Activated CD4-positive, alpha-beta memory T cell treated with anti-CD3 and anti-CD28 coated beads, Interleukin-2, amount 10 ng/mL, durations not matched to agents 7 days and 5 days (primary cell): ENCODE measurements at regions of chr17 and their contacts with region 1.

Region 1: GRCh38 chr17:38351412-38352222 is at the start of gene SOCS7:
- DNase-seq: peak; percentile 91
- H3K4me3 Mint-ChIP-seq: peak within 1 kb of the TSS; percentile 81
- H3K27ac Mint-ChIP-seq: peak within 1 kb of the TSS; percentile 86
- H3K4me1 Mint-ChIP-seq: peaks cover 36% of the 10 kb centered on the region
- H3K27me3 Mint-ChIP-seq: no peaks in the 10 kb centered on the region
- total RNA-seq, gene SOCS7: 14.1 to 15.0 TPM

Region 2: GRCh38 chr17:38322091-38322779 is 29.4 kb before region 1 on chr17:
- CTCF ChIA-PET with region 1: interaction called, 10 read pairs
- POLR2A ChIA-PET with region 1: interaction called, 4 read pairs
- DNase-seq: peak; percentile 74
- H3K4me3 Mint-ChIP-seq: no peak overlapping the region
- H3K27ac Mint-ChIP-seq: no peak overlapping the region
- H3K4me1 Mint-ChIP-seq: peaks cover 7% of the 10 kb centered on the region
- H3K27me3 Mint-ChIP-seq: no peaks in the 10 kb centered on the region

Region 3: DNA sequence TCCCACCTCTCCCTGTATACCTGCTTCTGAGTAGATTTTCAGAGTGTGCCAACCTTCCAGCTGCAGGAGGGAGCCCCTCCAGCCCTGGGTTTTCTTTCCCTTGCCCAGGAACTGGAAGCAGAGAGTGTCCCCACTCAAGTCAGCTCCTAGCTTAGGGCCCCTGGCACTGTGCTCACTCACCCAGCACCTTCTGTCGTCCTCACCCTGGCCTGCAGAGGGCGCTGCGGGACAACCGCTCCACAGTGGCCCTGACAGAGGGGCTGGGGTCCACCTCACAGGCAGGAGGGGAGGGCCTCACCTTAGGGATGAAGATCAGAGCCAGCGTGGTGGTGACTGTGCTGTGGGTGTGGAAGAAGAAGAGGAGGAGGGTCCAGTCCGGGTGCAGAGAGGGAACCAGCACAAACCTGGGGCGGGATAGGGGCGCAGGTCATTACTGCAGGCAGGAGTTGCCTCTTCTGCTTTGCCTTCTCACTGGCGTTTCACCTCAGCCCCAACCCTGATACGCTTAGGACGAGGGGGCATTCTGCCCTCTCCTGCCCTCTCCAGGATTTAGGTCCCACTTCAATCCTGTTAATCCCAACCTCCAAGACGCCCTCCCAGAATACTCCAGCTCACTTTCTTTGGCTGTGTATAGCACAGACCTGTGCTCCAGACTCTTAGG is 17.9 kb before region 1 on chr17:
- CTCF ChIA-PET with region 1: interaction called, 19 read pairs
- POLR2A ChIA-PET with region 1: no interaction called
- DNase-seq: peak; percentile 64
- H3K4me3 Mint-ChIP-seq: no peak overlapping the region
- H3K27ac Mint-ChIP-seq: no peak overlapping the region
- H3K4me1 Mint-ChIP-seq: no peaks in the 10 kb centered on the region
- H3K27me3 Mint-ChIP-seq: peaks cover 2% of the 10 kb centered on the region

Region 4: DNA sequence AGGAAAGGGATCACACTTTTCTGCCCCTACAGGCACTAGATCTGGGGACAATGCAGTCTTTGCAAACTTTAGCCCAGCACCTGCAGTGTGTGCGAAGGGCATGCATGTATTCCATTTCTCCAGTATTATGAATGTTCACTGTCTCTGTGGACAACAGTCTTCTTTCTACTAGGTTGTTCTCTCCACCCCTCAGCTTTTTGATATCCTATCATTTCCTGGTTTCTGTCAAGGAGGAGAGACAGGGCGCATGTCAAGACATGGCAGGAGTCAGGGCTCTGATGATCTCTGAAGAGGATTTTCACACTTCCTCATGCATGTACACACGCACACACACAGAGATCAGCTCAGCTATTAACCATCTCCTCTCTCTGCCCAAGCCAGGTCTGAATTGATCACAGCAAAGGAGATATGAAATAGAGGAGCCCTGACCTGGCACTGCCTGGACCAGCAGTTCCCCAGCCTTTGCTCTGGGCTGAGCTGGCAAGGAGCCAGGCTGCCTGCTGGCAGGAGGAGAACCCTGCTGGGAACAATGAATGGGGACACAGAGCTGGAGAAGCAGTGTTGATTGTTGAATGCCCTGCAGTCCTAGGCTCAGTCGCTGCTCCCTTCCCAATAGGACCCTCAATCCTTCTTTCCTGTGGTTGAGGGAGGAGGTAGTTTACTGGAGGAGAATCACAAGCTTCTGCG is 10.4 kb before region 1 on chr17:
- CTCF ChIA-PET with region 1: interaction called, 17 read pairs
- POLR2A ChIA-PET with region 1: interaction called, 4 read pairs
- DNase-seq: no peak
- H3K4me3 Mint-ChIP-seq: no peak overlapping the region
- H3K27ac Mint-ChIP-seq: no peak overlapping the region
- H3K4me1 Mint-ChIP-seq: no peaks in the 10 kb centered on the region
- H3K27me3 Mint-ChIP-seq: peaks cover 5% of the 10 kb centered on the region

Region 5: DNA sequence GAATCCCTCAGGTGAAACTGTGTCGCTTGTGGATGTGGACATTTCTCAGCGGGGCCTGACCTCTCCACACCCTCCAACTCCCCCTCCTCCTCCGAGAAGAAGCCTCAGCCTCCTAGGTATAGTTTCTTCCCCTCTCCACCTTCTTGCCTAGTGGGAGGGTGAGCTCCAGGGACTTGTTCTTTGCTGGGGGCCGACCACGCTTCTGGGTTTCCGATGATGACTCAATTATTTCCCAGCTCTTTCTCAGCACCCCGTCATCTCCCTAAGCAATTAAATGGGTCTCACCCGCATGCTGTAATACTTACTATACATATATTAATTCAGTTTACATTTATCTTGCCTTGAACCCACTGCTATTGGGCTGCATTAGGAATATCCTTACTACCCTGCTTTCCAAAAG is 13.1 kb after region 1 on chr17:
- CTCF ChIA-PET with region 1: interaction called, 11 read pairs
- POLR2A ChIA-PET with region 1: interaction called, 9 read pairs
- DNase-seq: no peak
- H3K4me3 Mint-ChIP-seq: no peak overlapping the region
- H3K27ac Mint-ChIP-seq: no peak overlapping the region
- H3K4me1 Mint-ChIP-seq: no peaks in the 10 kb centered on the region
- H3K27me3 Mint-ChIP-seq: no peaks in the 10 kb centered on the region

Region 6: DNA sequence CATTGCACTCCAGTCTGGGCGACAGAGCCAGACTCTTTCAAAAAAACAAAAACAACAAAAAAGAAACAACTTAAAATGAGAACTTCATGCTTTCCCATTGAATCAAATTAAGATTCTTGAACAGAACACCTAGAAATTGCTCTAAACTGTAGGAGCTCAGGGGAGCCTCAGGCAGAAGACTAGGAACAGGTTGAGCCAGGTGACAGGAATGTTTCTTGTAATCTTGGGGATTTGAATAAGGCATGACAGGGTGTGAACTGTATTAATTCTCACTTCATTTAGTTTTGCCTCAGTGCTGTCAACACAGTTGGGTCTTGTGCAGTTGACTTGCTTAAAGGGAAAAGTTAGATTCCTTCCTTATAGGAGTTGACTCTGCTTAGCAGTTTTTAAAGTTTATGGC is 27.8 kb after region 1 on chr17:
- CTCF ChIA-PET with region 1: interaction called, 11 read pairs
- POLR2A ChIA-PET with region 1: no interaction called
- DNase-seq: no peak
- H3K4me3 Mint-ChIP-seq: no peak overlapping the region
- H3K27ac Mint-ChIP-seq: no peak overlapping the region
- H3K4me1 Mint-ChIP-seq: no peaks in the 10 kb centered on the region
- H3K27me3 Mint-ChIP-seq: no peaks in the 10 kb centered on the region

Region 7: DNA sequence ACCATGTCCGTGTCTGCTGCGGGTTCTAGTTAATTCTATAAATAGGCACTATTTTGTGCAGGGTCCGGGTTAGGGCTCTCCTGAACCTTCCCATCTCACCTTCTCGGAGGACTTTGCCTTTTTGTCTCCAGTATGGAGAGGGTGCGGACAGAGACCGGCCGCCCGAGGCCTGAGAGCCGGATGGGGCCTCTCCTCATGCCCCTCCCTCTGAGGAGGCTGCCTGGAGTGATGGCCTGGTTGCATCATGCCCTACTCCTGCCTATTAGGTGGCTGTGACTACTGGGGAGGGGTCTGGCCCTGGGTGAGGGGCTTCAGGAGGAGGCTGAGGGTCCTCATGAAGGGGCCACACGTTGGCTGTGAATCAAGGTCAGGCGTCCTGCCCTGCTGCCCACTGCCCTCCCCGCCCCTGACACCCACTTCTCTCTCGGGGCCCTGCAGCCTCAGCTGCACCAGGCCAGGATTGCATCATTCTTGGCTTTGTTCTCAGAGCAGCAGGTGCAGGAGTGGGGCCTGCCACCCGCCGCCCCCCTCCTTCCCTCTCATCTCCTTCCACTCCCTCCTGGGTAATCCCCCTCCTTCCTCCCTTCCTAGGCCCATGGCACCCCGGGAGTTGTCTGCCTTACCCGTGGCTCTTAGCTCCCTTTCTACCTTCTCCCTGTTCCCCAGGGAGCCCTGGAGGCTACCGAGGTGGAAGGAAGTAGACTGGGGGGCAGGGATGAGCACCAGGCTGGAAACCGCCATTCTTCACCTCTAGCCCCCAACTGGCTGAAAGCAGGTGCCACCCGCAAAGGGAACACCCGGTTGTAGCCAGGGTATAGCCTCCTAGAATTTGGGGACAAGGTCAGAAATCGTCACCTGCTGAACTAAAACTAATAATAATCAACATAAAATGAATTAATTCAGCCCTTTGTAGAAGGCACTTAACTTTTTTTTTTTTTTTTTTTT is 63.9 kb after region 1 on chr17:
- CTCF ChIA-PET with region 1: interaction called, 150 read pairs
- POLR2A ChIA-PET with region 1: interaction called, 11 read pairs
- DNase-seq: peak; percentile 26
- H3K4me3 Mint-ChIP-seq: peak overlapping the region; percentile 55
- H3K27ac Mint-ChIP-seq: peak overlapping the region; percentile 31
- H3K4me1 Mint-ChIP-seq: peaks cover 12% of the 10 kb centered on the region
- H3K27me3 Mint-ChIP-seq: peaks cover 33% of the 10 kb centered on the region

Region 8: GRCh38 chr17:38444151-38444550 is 92.5 kb after region 1 on chr17:
- CTCF ChIA-PET with region 1: no interaction called
- POLR2A ChIA-PET with region 1: no interaction called
- DNase-seq: peak; percentile 56
- H3K4me3 Mint-ChIP-seq: no peak overlapping the region
- H3K27ac Mint-ChIP-seq: no peak overlapping the region
- H3K4me1 Mint-ChIP-seq: no peaks in the 10 kb centered on the region
- H3K27me3 Mint-ChIP-seq: peaks cover 8% of the 10 kb centered on the region

Region 9: GRCh38 chr17:38498186-38498752 is 146.7 kb after region 1 on chr17:
- CTCF ChIA-PET with region 1: no interaction called
- POLR2A ChIA-PET with region 1: no interaction called
- DNase-seq: no peak
- H3K4me3 Mint-ChIP-seq: no peak overlapping the region
- H3K27ac Mint-ChIP-seq: no peak overlapping the region
- H3K4me1 Mint-ChIP-seq: no peaks in the 10 kb centered on the region
- H3K27me3 Mint-ChIP-seq: no peaks in the 10 kb centered on the region

Region 10: DNA sequence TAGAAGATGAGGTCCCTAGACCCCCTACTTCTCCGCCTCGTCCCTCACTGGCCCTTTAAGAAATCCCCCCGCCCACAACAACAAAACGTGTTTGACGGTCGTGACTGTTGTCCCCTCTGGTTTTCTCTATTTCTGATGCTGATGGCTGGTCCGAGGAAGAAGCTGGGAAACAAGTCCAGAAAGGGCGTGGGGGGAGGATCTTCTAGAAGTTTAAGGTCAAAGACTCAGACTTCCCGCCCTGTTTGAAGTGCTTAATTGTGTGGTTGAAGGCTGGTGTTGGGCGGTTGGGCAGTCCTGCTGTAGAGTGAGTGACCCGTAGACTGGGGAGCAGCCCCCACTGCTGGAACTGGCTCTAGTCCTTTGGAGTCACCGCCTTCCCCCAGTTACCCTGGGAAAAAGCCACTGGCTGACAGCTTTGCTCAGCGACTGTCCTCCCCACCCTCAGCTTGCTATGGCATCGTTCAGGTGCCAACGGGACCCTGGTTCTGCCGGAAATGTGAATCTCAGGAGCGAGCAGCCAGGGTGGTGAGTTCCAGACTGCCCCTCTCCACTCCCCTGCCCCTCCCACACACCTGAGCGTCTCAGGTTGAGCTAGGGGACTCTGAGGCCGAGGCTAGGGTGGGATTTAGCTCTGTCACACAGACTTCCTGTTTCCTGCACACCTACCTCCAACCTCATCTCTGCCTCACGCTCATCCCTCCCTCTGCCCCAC is 355.0 kb after region 1 on chr17:
- CTCF ChIA-PET with region 1: no interaction called
- POLR2A ChIA-PET with region 1: no interaction called
- DNase-seq: peak; percentile 29
- H3K4me3 Mint-ChIP-seq: peak overlapping the region; percentile 87
- H3K27ac Mint-ChIP-seq: peak overlapping the region; percentile 94
- H3K4me1 Mint-ChIP-seq: peaks cover 53% of the 10 kb centered on the region
- H3K27me3 Mint-ChIP-seq: no peaks in the 10 kb centered on the region